Activated CD4-positive, alpha-beta memory T cell treated with anti-CD3 and anti-CD28 coated beads for 36 hours (primary cell): ENCODE measurements at regions of chr11 and their contacts with region 1.

Region 1: DNA sequence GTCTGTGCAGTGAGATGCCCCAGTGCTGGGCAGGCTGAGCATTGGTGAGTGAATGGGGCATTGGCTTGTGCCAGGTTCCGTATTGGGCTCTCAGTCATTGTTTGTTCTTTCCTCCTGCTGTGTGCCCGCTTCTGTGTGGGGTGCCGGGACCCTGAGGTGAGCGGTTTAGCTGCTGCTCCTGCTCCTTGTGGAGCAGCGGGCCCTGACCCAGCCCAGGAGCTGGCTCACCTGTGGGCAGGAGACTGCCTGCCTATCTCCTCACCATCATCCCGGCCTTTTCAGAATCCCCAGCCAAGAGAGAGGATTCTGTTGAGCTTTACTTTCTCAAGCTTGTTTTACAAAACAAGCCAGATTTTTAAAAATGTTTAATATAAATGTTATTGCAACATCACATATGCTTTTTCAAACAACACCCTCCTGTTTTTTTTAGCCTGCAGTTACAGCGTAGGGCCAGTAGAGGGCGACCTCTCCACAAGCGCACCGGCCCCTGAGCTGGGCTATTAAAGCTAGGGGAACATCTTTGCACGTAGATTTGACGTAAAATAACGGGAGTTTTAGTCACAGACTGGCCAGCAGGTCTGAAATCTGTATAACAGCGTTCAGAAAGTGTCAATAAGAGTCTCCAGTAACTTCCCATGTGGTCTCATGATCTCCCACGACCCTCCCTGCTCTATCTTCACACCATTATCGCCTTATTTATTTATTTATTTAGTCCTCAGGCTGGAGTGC is 25.1 kb upstream of the RELT start:
- DNase-seq: peak; percentile 76
- H3K4me3 Mint-ChIP-seq: no peak overlapping the region
- H3K27ac Mint-ChIP-seq: no peak overlapping the region
- H3K4me1 Mint-ChIP-seq: no peaks in the 10 kb centered on the region
- H3K27me3 Mint-ChIP-seq: no peaks in the 10 kb centered on the region

Region 2: DNA sequence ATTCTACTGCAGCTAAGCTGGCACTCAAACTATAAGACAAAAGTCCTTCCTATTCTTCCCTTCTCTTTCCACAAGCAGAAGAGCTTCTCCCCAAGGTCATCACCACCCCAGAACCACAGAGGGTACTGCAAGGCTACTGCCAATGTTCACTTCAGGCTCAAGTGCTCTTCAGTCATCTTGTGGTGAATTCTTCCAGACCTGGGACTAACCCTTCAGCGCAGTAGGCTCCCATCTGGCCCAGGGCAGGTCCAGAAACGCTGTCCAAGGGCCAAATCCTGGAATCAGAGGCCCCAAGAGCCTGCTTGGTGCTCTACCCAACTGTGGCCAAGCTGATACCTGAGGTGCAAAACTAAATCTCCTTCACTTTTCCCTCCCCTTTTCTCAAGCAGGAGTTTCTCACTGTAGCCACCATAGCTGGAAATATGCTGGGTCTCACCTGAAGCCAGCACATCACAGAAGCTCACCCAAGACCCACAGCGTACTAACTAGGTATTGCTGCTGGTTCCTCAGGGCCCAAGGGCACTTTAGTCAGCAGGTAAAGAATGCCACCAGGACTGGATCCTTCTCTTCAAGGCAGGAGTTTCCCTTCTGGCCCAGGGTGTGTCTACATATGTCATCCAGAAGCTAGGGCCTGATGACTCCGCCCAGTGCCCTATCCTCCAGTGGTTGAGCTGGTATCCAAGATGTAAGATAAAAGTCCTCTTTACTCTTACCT is 236.8 kb before region 1 on chr11:
- CTCF ChIA-PET with region 1: no interaction called
- POLR2A ChIA-PET with region 1: no interaction called
- intact Hi-C with region 1: no loop called
- DNase-seq: no peak
- H3K4me3 Mint-ChIP-seq: no peak overlapping the region
- H3K27ac Mint-ChIP-seq: no peak overlapping the region
- H3K4me1 Mint-ChIP-seq: no peaks in the 10 kb centered on the region
- H3K27me3 Mint-ChIP-seq: no peaks in the 10 kb centered on the region

Region 3: GRCh38 chr11:73335204-73335923 is 15.7 kb before region 1 on chr11:
- CTCF ChIA-PET with region 1: interaction called, 26 read pairs
- POLR2A ChIA-PET with region 1: no interaction called
- intact Hi-C with region 1: no loop called
- DNase-seq: peak; percentile 83
- H3K4me3 Mint-ChIP-seq: no peak overlapping the region
- H3K27ac Mint-ChIP-seq: no peak overlapping the region
- H3K4me1 Mint-ChIP-seq: no peaks in the 10 kb centered on the region
- H3K27me3 Mint-ChIP-seq: no peaks in the 10 kb centered on the region

Region 4: GRCh38 chr11:73376160-73376802 is 25.2 kb after region 1 on chr11 and contains the start of gene RELT:
- CTCF ChIA-PET with region 1: interaction called, 23 read pairs
- POLR2A ChIA-PET with region 1: no interaction called
- intact Hi-C with region 1: loop called (anchors 1 kb)
- DNase-seq: peak; percentile 95
- H3K4me3 Mint-ChIP-seq: peak within 1 kb of the TSS; percentile 97
- H3K27ac Mint-ChIP-seq: peak within 1 kb of the TSS; percentile 95
- H3K4me1 Mint-ChIP-seq: peaks cover 39% of the 10 kb centered on the region
- H3K27me3 Mint-ChIP-seq: no peaks in the 10 kb centered on the region
- total RNA-seq, gene RELT: 18.5 to 18.9 TPM

Region 5: DNA sequence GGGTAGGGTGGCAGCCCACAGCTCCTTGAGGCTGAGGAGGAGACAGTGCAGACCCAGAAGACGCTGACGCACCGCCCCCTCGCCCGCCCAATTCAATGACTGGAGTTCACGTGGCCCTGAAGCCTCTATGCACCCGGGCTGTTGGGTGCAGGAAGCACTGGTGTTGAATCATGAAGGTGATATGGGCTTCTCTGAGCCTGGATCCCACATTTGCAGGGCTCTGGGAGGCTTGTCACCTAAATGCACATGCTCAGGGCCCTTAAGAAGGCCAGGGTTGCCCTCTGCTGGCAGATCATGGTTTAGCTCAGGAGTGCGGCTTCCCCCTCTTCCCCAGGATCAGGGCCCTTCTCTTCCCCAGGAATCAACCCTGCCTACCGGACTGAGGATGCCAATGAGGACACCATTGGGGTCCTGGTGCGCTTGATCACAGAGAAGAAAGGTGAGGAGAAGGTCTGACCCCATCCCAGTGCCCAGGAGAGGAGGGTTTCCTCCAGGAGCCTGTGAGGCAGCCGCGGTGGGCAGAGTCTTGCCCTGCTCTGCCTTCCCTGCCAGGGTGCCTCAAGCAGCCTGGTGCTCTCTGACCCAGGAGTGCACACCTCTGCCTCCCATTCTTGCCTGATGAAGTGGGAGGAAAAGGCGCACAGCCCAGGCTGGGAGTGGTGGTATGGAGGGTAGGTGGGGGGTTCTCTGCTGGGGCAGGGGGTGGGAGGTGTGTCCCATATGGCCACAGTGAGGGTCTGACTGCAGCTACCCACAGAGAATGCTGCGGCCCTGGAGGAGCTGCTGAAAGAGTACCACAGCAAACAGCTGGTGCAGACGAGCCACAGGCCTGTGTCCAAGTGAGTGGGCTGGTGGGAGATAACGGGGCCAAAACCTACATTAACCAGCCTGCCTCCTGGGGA is 42.7 kb after region 1 on chr11:
- CTCF ChIA-PET with region 1: interaction called, 108 read pairs
- POLR2A ChIA-PET with region 1: interaction called, 12 read pairs
- intact Hi-C with region 1: loop called (anchors 1 kb)
- DNase-seq: peak; percentile 75
- H3K4me3 Mint-ChIP-seq: no peak overlapping the region
- H3K27ac Mint-ChIP-seq: no peak overlapping the region
- H3K4me1 Mint-ChIP-seq: no peaks in the 10 kb centered on the region
- H3K27me3 Mint-ChIP-seq: no peaks in the 10 kb centered on the region

Region 6: GRCh38 chr11:73414977-73415651 is 64.0 kb after region 1 on chr11:
- CTCF ChIA-PET with region 1: interaction called, 13 read pairs
- POLR2A ChIA-PET with region 1: no interaction called
- intact Hi-C with region 1: no loop called
- DNase-seq: no peak
- H3K4me3 Mint-ChIP-seq: no peak overlapping the region
- H3K27ac Mint-ChIP-seq: no peak overlapping the region
- H3K4me1 Mint-ChIP-seq: no peaks in the 10 kb centered on the region
- H3K27me3 Mint-ChIP-seq: no peaks in the 10 kb centered on the region

Region 7: GRCh38 chr11:73661035-73661628 is 310.1 kb after region 1 on chr11:
- CTCF ChIA-PET with region 1: interaction called, 104 read pairs
- POLR2A ChIA-PET with region 1: no interaction called
- intact Hi-C with region 1: loop called (anchors 1 kb)
- DNase-seq: peak; percentile 90
- H3K4me3 Mint-ChIP-seq: peak overlapping the region; percentile 37
- H3K27ac Mint-ChIP-seq: no peak overlapping the region
- H3K4me1 Mint-ChIP-seq: peaks cover 3% of the 10 kb centered on the region
- H3K27me3 Mint-ChIP-seq: no peaks in the 10 kb centered on the region